ENCODE measurements at regions of chr11 and their contacts with region 1.

Region 1: GRCh38 chr11:62169091-62169847 is 20.7 kb upstream of the SCGB1D1 start:
- DNase-seq: peak in 1 of 2 donors; percentile 63
- ATAC-seq: peak; percentile 26 to 62 (median 49)
- H3K4me3 ChIP-seq: no peak overlapping the region
- H3K27ac ChIP-seq: peak overlapping the region in 6 of 10 donors; percentile 41 to 59 (median 56)
- H3K4me1 ChIP-seq: peaks cover 0 to 26% (median 7%) of the 10 kb centered on the region in 9 donors
- H3K27me3 ChIP-seq: peaks cover 0 to 31% (median 11%) of the 10 kb centered on the region in 7 donors
- CTCF ChIP-seq: no peak

Region 2: DNA sequence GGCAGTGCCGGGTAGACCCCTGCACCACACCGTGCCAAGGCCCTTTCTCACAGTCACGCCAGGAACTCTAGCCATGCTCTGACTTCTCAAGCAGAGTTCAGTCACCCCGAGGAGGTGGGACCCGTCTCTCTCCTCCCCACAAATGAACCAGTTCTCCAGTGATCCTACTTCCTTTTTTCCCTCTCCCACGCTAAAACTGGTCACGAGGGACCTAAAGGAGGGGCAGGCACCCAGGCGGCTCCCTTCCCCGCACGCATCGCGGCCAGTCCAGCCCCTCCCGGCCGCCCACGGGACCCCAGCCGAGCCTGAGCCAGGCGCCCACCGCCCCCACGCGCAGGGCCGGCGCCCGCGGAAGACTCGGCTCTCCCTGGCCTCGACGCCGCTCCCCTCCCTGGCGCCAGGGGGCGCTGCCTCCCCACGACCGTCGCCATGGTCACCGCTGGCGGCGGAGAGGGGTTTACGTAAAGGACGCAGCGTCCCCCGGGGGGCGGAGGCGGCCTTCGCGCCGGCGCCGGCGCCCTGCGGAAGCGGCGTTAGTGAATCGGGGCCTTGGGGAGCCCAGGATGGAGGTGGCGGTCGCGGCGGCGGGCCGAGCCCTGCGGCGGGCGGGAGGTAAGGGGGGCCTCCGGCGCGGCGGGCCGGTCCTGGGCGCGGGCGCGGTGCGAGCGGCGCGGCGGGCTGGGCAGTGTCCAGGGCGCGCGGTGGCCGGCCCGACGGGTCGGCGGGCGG is 489.2 kb before region 1 on chr11 and contains the start of gene DAGLA:
- intact Hi-C with region 1: no loop called
- DNase-seq: peak; percentile 54 to 82
- ATAC-seq: peak; percentile 47 to 86 (median 74)
- H3K4me3 ChIP-seq: peak within 1 kb of the TSS in 9 of 10 donors; percentile 42 to 63 (median 57)
- H3K27ac ChIP-seq: peak within 1 kb of the TSS in 5 of 10 donors; percentile 44 to 79 (median 50)
- H3K4me1 ChIP-seq: peaks cover 4 to 49% (median 35%) of the 10 kb centered on the region in 9 donors
- H3K27me3 ChIP-seq: peaks cover 0 to 28% (median 0%) of the 10 kb centered on the region in 7 donors
- CTCF ChIP-seq: peak; percentile 92 to 100 (median 97)
- total RNA-seq, gene DAGLA: 1.8 to 5.0 (median 3.4) TPM

Region 3: DNA sequence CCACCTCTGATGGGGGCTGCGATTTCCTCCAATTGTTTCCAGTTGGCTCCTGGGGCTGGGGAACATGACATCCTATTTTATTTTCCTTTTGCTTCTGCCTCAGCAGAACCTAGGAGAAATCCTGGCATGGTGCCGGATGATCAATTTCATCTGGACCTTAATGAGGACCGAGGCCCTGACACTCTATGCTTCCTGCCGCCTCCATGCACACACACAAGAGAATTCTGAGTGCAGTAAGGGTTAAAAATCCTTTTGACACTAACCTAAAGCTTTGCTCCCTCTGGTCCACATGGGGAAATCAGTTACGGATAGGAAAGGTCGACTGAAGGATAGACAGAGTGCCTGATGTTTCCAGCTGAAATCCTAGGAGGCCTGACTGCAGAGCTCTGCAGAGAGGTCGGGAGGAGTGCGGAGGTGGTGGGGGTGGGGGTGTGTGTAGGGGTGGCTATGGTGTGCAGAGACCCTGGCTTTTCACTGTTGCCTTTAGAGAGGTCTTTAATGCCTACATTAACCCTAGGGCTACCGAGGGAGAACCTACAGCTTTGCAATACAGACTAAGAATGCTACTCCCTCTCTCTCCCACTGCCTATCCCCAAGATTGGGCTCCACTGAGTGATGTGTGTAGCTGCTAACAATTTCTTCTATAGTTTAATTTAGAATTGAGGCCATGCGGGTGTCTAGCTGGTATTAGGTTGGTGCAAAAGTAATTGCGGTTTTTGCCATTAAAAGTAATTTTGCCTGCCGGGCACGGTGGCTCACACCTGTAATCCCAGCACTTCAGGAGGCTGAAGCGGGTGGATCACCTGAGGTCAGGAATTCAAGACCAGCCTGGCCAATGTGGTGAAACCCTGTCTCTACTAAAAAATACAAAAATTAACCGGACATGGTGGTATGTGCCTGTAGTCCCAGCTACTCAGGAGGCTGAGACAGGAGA is 99.0 kb before region 1 on chr11:
- intact Hi-C with region 1: no loop called
- DNase-seq: no peak
- ATAC-seq: no peak
- H3K4me3 ChIP-seq: no peak overlapping the region
- H3K27ac ChIP-seq: no peak overlapping the region
- H3K4me1 ChIP-seq: peaks cover 0 to 7% (median 0%) of the 10 kb centered on the region in 9 donors
- H3K27me3 ChIP-seq: no peaks in the 10 kb centered on the region
- CTCF ChIP-seq: no peak

Region 4: GRCh38 chr11:62306227-62306626 is 137.0 kb after region 1 on chr11:
- intact Hi-C with region 1: loop called (anchors 1 to 5 kb)
- DNase-seq: no peak
- ATAC-seq: no peak
- H3K4me3 ChIP-seq: no peak overlapping the region
- H3K27ac ChIP-seq: no peak overlapping the region
- H3K4me1 ChIP-seq: peaks cover 0 to 4% (median 0%) of the 10 kb centered on the region in 9 donors
- H3K27me3 ChIP-seq: peaks cover 0 to 23% (median 19%) of the 10 kb centered on the region in 7 donors
- CTCF ChIP-seq: no peak

Region 5: GRCh38 chr11:62315431-62315830 is 146.2 kb after region 1 on chr11:
- intact Hi-C with region 1: loop called (anchors 1 to 5 kb)
- DNase-seq: no peak
- ATAC-seq: no peak
- H3K4me3 ChIP-seq: no peak overlapping the region
- H3K27ac ChIP-seq: no peak overlapping the region
- H3K4me1 ChIP-seq: peaks cover 0 to 11% (median 0%) of the 10 kb centered on the region in 9 donors
- H3K27me3 ChIP-seq: peaks cover 0 to 31% (median 8%) of the 10 kb centered on the region in 7 donors
- CTCF ChIP-seq: no peak

Region 6: GRCh38 chr11:62370743-62371440 is 201.6 kb after region 1 on chr11:
- intact Hi-C with region 1: loop called in 3 of 10 experiments (anchors 5 to 10 kb)
- DNase-seq: peak in 1 of 2 donors; percentile 37
- ATAC-seq: no peak
- H3K4me3 ChIP-seq: peak overlapping the region in 2 of 10 donors; percentile 16 to 30
- H3K27ac ChIP-seq: peak overlapping the region in 1 of 10 donors; percentile 66
- H3K4me1 ChIP-seq: peaks cover 0 to 9% (median 0%) of the 10 kb centered on the region in 9 donors
- H3K27me3 ChIP-seq: no peaks in the 10 kb centered on the region
- CTCF ChIP-seq: no peak

Region 7: GRCh38 chr11:62383822-62384221 is 214.6 kb after region 1 on chr11:
- intact Hi-C with region 1: loop called in 4 of 10 experiments (anchors 5 to 10 kb)
- DNase-seq: no peak
- ATAC-seq: no peak
- H3K4me3 ChIP-seq: no peak overlapping the region
- H3K27ac ChIP-seq: no peak overlapping the region
- H3K4me1 ChIP-seq: peaks cover 0 to 9% (median 6%) of the 10 kb centered on the region in 9 donors
- H3K27me3 ChIP-seq: no peaks in the 10 kb centered on the region
- CTCF ChIP-seq: no peak

Measured in heart right ventricle (tissue), 16 donors.